Spleen (tissue), 13 donors: ENCODE measurements at regions of chr14 and their contacts with region 1.

Region 1: DNA sequence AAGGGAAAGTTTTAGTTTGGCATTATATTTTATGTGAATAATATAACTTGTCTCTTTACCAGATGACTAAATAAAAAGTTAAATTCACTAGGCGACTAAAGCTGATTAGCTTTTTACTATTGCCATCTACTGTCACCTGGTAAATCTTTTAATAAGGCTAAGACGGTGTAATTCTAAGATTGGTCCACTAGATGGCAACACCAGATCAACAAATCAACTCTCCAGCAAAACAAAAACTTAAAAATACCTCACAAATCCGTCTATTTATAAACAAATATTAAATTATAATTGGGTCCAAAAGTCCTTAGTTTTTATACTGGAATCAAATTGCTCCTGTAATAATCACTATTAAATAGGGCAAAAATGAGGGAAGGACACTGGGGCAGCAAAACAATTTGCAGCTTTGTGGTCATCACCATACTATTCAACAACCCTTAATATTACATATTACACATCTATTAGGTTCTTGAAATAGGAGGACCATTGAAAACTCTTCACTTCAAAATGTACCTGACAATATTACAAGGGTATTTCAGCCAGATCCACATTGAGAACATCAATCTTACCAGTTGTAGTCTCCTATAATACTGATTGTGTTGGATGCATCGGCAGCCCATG is 47.9 kb downstream of the GALC start:
- DNase-seq: no peak
- H3K4me3 ChIP-seq: no peak overlapping the region
- H3K27ac ChIP-seq: no peak overlapping the region
- H3K4me1 ChIP-seq: peaks cover 0 to 4% (median 0%) of the 10 kb centered on the region in 6 donors
- H3K27me3 ChIP-seq: no peaks in the 10 kb centered on the region
- CTCF ChIP-seq: peak; percentile 36 to 84 (median 71)
- POLR2A ChIP-seq: no peak

Region 2: DNA sequence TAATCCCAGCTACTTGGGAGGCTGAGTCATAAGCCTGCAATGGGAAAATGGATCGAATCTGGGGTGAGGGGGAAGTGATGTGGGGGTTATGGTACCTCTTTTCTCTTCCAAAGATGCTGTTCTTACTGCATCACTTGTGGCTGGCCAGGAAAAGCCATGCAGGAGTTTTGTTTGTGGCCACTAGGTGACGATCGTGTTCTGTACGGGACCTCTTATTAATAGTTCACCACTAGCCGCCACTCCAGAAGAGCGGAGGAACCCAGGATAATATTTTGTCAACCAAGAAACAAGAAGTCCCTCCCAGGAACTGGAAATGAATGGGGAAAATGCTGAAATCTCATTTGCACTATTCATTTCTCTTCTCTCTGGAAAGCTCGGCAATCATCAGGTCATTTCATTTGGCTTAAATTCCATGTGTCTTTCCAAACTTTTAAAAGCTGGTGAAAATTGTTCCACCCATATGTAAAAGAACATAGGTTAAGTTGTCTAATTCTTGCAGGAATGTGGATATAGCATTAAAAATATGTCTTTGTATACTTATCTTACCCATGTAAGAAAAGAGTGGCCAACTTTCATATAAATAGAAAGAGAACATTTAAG is 68.8 kb after region 1 on chr14:
- intact Hi-C with region 1: loop called (anchors 10 kb)
- DNase-seq: no peak
- H3K4me3 ChIP-seq: no peak overlapping the region
- H3K27ac ChIP-seq: peak overlapping the region in 2 of 8 donors; percentile 3 to 10
- H3K4me1 ChIP-seq: peaks cover 0 to 86% (median 43%) of the 10 kb centered on the region in 6 donors
- H3K27me3 ChIP-seq: no peaks in the 10 kb centered on the region
- CTCF ChIP-seq: peak; percentile 45 to 86 (median 78)
- POLR2A ChIP-seq: no peak